ENCODE measurements at regions of chr3 and their contacts with region 1.

Region 1: GRCh38 chr3:14921078-14921616 is 26.2 kb upstream of the NR2C2 start:
- DNase-seq: peak; percentile 82
- ATAC-seq: peak; percentile 98
- H3K4me3 ChIP-seq: no peak overlapping the region
- H3K4me3 Mint-ChIP-seq: no peak overlapping the region
- H3K27ac ChIP-seq: no peak overlapping the region
- H3K27ac Mint-ChIP-seq: no peak overlapping the region
- H3K4me1 ChIP-seq: peaks cover 0 to 6% of the 10 kb centered on the region in 2 donors
- H3K4me1 Mint-ChIP-seq: no peaks in the 10 kb centered on the region
- H3K27me3 ChIP-seq: no peaks in the 10 kb centered on the region
- H3K27me3 Mint-ChIP-seq: peaks cover 7% of the 10 kb centered on the region
- CTCF ChIP-seq: peak; percentile 99

Region 2: GRCh38 chr3:13657660-13658435 is 1263.3 kb before region 1 on chr3:
- CTCF ChIA-PET with region 1: interaction called, 4 read pairs
- POLR2A ChIA-PET with region 1: no interaction called
- intact Hi-C with region 1: loop called (anchors 5 kb)
- DNase-seq: peak; percentile 60
- ATAC-seq: peak; percentile 75
- H3K4me3 ChIP-seq: no peak overlapping the region
- H3K4me3 Mint-ChIP-seq: no peak overlapping the region
- H3K27ac ChIP-seq: no peak overlapping the region
- H3K27ac Mint-ChIP-seq: no peak overlapping the region
- H3K4me1 ChIP-seq: peaks cover 4 to 8% of the 10 kb centered on the region in 2 donors
- H3K4me1 Mint-ChIP-seq: peaks cover 7% of the 10 kb centered on the region
- H3K27me3 ChIP-seq: peaks cover 0 to 56% (median 14%) of the 10 kb centered on the region in 4 experiments
- H3K27me3 Mint-ChIP-seq: peaks cover 48% of the 10 kb centered on the region
- CTCF ChIP-seq: peak; percentile 76

Region 3: DNA sequence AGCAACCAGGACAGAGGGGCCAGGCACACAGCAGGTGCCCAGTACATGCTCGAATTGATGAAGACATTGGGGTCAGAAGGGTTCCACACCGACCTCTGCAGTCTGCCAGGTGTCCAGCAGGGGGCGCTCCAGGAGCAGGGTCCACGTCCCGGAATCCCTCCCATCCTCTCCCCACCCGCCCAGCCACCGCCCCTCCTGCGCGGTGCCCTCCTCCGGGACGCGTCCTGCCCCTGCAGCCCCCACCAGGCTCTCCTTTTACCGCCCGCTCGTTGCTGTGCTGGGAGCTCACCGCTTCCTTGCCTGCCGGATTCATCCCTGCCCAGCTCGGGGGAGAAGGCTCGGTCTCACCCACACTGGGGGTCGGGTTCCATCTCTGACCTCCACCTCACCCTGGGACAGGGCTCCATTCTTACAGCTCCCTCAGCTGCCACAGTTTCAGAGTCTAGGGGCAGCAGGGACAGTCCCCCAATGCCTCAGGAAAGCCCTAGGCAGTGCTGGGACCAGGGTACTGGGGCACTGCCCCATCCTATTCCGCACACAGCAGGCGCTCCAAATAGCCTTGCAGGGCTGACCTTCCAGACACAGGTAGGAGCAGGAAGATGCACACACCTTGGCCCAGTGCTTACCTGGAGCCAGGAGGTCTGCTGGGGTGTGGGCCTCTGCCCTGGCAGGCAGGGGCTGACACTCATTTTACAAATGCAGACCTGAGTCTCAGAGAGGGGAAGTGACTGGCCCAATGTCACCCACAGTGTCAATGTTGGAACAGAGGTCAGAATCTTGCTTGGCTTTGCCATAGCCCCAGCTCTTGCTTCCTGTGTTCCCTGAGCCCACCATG is 412.0 kb before region 1 on chr3:
- CTCF ChIA-PET with region 1: interaction called, 21 read pairs
- POLR2A ChIA-PET with region 1: no interaction called
- intact Hi-C with region 1: loop called (anchors 2 kb)
- DNase-seq: peak; percentile 58
- ATAC-seq: no peak
- H3K4me3 ChIP-seq: no peak overlapping the region
- H3K4me3 Mint-ChIP-seq: no peak overlapping the region
- H3K27ac ChIP-seq: no peak overlapping the region
- H3K27ac Mint-ChIP-seq: no peak overlapping the region
- H3K4me1 ChIP-seq: peaks cover 0 to 4% of the 10 kb centered on the region in 2 donors
- H3K4me1 Mint-ChIP-seq: peaks cover 2% of the 10 kb centered on the region
- H3K27me3 ChIP-seq: peaks cover 0 to 6% (median 0%) of the 10 kb centered on the region in 4 experiments
- H3K27me3 Mint-ChIP-seq: peaks cover 9% of the 10 kb centered on the region
- CTCF ChIP-seq: peak; percentile 85

Region 4: DNA sequence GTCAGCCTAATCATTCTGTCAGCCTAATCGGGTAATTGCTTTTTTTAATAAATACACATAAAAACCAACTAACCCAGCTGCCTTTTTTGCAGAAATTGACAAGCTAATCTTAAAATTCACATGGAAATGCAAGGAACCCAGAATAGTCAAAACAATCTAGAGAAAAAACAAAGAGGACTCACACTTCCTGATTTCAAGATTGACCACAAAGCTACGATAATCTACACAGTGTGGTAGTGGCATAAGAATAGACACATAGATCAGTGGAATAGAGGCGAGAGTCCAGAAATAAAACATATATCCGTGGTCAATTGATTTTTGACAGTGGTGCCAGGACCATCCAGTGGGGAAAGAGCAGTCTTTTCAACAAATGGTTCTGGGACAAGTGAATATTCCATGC is 248.6 kb before region 1 on chr3:
- CTCF ChIA-PET with region 1: interaction called, 35 read pairs
- POLR2A ChIA-PET with region 1: no interaction called
- intact Hi-C with region 1: no loop called
- DNase-seq: no peak
- ATAC-seq: no peak
- H3K4me3 ChIP-seq: no peak overlapping the region
- H3K4me3 Mint-ChIP-seq: no peak overlapping the region
- H3K27ac ChIP-seq: no peak overlapping the region
- H3K27ac Mint-ChIP-seq: no peak overlapping the region
- H3K4me1 ChIP-seq: no peaks in the 10 kb centered on the region
- H3K4me1 Mint-ChIP-seq: no peaks in the 10 kb centered on the region
- H3K27me3 ChIP-seq: no peaks in the 10 kb centered on the region
- H3K27me3 Mint-ChIP-seq: no peaks in the 10 kb centered on the region
- CTCF ChIP-seq: no peak

Region 5: DNA sequence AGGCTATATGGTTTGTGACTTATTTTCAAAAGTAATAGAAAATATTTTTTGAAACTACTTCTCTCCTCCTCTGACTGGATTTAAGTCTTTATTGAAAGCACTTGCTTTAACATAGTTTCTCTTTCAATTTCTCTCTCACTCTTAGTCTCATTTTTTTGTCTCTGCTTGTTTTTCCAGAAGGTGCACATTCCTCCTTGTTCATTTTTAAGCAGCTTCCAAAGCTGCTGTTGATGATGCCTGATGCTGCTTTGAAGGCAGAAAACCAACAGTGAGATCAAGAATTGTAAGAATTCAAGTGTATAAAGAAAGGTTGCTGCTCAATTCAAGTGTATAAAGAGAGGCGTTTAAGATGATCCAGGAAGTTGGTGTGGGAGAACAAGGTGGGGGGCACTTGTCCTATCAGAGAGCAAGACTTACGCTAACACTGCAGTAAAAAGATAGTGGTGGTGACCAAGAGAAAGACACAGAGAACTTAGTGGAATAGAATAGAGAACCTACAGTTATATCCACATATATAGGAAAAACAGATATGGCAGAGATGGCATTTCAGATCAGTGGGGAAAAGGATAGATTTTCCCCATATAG is 38.3 kb after region 1 on chr3:
- CTCF ChIA-PET with region 1: no interaction called
- POLR2A ChIA-PET with region 1: no interaction called
- intact Hi-C with region 1: no loop called
- DNase-seq: peak; percentile 44
- ATAC-seq: peak; percentile 31
- H3K4me3 ChIP-seq: peak overlapping the region in 4 of 5 experiments; percentile 22 to 50 (median 36)
- H3K4me3 Mint-ChIP-seq: peak overlapping the region; percentile 87
- H3K27ac ChIP-seq: peak overlapping the region; percentile 54 to 76
- H3K27ac Mint-ChIP-seq: peak overlapping the region; percentile 92
- H3K4me1 ChIP-seq: peaks cover 26 to 27% of the 10 kb centered on the region in 2 donors
- H3K4me1 Mint-ChIP-seq: peaks cover 41% of the 10 kb centered on the region
- H3K27me3 ChIP-seq: no peaks in the 10 kb centered on the region
- H3K27me3 Mint-ChIP-seq: no peaks in the 10 kb centered on the region
- CTCF ChIP-seq: no peak

Region 6: DNA sequence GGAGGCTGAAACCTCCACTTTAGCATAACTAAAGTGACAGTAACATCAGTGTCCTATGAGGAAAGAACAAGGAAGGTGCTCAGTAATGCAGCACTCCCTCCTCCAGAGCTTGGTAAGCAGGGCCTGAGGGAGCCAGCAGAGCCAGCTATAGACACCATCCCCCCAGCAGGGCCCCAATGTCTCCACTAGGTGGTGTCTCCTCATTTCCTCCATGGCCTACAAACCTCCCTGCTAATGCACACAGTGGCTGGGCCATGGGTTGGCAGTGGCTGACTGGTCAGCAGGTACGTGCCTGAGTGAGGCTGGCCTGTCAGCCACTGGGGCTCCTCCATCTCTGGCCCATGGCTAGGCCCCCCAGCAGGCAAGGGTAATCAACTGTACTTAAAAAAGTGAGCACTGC is 130.4 kb after region 1 on chr3:
- CTCF ChIA-PET with region 1: interaction called, 5 read pairs
- POLR2A ChIA-PET with region 1: no interaction called
- intact Hi-C with region 1: loop called (anchors 1 kb)
- DNase-seq: peak; percentile 41
- ATAC-seq: no peak
- H3K4me3 ChIP-seq: no peak overlapping the region
- H3K4me3 Mint-ChIP-seq: peak overlapping the region; percentile 13
- H3K27ac ChIP-seq: peak overlapping the region; percentile 72 to 86
- H3K27ac Mint-ChIP-seq: peak overlapping the region; percentile 93
- H3K4me1 ChIP-seq: peaks cover 52 to 64% of the 10 kb centered on the region in 2 donors
- H3K4me1 Mint-ChIP-seq: peaks cover 65% of the 10 kb centered on the region
- H3K27me3 ChIP-seq: no peaks in the 10 kb centered on the region
- H3K27me3 Mint-ChIP-seq: no peaks in the 10 kb centered on the region
- CTCF ChIP-seq: peak; percentile 59

Region 7: GRCh38 chr3:15108082-15108545 is 187.0 kb after region 1 on chr3:
- CTCF ChIA-PET with region 1: interaction called, 20 read pairs
- POLR2A ChIA-PET with region 1: no interaction called
- intact Hi-C with region 1: no loop called
- DNase-seq: peak; percentile 82
- ATAC-seq: peak; percentile 98
- H3K4me3 ChIP-seq: no peak overlapping the region
- H3K4me3 Mint-ChIP-seq: no peak overlapping the region
- H3K27ac ChIP-seq: no peak overlapping the region
- H3K27ac Mint-ChIP-seq: no peak overlapping the region
- H3K4me1 ChIP-seq: peaks cover 3 to 6% of the 10 kb centered on the region in 2 donors
- H3K4me1 Mint-ChIP-seq: peaks cover 6% of the 10 kb centered on the region
- H3K27me3 ChIP-seq: peaks cover 0 to 9% (median 0%) of the 10 kb centered on the region in 4 experiments
- H3K27me3 Mint-ChIP-seq: peaks cover 4% of the 10 kb centered on the region
- CTCF ChIP-seq: peak; percentile 90